Calu3 (cell line): ENCODE measurements at regions of chr1 and their contacts with region 1.

Region 1: DNA sequence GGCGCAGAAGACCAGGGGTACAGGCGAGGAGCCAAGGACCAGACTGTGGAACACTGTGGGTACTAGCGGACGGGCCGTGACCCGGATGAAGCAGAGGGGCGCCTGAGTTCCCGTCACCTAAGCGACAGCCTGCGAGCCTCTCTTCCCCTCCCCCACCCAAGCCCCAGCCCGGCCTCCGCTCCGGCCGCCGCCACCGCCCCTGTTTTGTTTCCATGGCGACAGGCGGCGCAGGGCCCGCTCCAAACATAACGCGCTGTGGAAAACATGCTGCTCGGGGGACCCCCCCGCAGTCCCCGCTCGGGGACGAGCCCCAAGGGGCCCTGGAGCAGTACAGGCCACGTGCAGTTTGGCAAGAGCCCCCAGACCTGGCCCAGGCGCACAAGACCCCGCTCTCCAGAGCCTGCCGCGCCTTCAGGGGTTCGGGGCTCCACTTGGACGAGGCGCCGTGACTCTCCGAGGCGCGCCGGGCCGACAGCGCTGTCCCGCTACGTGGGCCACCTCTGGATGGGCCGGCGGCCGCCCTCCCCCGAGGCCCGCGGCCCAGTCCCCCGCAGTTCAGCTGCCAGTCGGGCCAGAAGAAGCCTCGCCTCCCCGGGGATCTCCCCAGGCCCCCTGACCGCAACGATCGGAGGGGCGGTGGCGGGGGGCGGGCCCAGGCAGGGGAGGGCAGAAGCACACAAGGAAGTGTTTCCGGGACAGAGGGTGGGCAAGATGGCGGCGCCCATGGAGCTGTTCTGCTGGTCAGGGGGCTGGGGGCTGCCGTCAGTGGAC is at the start of gene MTX1:
- DNase-seq: peak; percentile 87
- H3K4me3 Mint-ChIP-seq: peak within 1 kb of the TSS; percentile 98
- H3K27ac Mint-ChIP-seq: peak within 1 kb of the TSS; percentile 92
- H3K4me1 Mint-ChIP-seq: peaks cover 30% of the 10 kb centered on the region
- H3K27me3 Mint-ChIP-seq: no peaks in the 10 kb centered on the region
- CTCF ChIP-seq: no peak
- total RNA-seq, gene MTX1: 58.9 and 60.0 TPM in 2 replicates

Region 2: DNA sequence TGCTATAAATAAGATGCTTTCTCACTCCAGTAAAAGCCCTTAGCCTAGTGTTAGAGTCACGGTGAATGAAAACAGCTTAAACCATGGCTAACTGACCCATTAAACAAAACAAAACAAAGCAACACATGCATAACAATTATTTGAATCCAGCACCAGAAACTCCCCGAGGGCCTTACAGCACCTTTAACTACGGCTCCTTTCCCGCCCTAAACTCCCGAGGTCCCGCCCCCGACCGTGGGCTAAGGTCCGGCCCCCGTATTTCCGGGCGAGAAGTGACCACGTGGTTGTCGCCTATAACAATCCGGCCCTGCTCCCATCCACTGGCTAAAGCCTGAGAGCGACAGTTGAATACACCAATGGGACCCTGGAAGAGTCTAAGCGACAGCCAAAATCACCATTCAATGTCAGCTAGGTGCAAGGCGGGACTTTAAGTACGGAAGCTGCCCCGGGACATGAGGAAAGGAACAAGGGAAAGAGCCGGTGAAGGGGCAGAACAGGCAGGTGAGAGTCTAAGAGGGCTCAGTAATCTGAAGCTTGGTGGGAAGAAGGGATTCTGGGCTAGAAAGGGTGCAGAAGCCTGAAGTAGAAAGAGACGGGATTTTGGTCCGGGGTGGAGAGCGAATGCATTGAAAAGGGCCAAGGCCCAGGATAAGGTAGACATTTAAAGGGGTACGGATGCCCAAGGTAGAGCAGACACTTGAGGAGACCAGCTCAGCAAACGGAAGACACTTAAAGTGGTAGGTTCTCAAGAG is 225.7 kb before region 1 on chr1 and contains the start of gene FLAD1:
- CTCF ChIA-PET with region 1: no interaction called
- intact Hi-C with region 1: no loop called
- DNase-seq: peak; percentile 99
- H3K4me3 Mint-ChIP-seq: no peak within 1 kb of the TSS
- H3K27ac Mint-ChIP-seq: no peak within 1 kb of the TSS
- H3K4me1 Mint-ChIP-seq: peaks cover 7% of the 10 kb centered on the region
- H3K27me3 Mint-ChIP-seq: no peaks in the 10 kb centered on the region
- CTCF ChIP-seq: no peak
- total RNA-seq, gene FLAD1: 74.3 and 75.1 TPM in 2 replicates

Region 3: GRCh38 chr1:155193275-155193990 is 15.3 kb before region 1 on chr1:
- CTCF ChIA-PET with region 1: interaction called, 23 read pairs
- intact Hi-C with region 1: no loop called
- DNase-seq: peak; percentile 95
- H3K4me3 Mint-ChIP-seq: peak overlapping the region; percentile 79
- H3K27ac Mint-ChIP-seq: peak overlapping the region; percentile 74
- H3K4me1 Mint-ChIP-seq: peaks cover 27% of the 10 kb centered on the region
- H3K27me3 Mint-ChIP-seq: peaks cover 49% of the 10 kb centered on the region
- CTCF ChIP-seq: peak; percentile 97

Region 4: DNA sequence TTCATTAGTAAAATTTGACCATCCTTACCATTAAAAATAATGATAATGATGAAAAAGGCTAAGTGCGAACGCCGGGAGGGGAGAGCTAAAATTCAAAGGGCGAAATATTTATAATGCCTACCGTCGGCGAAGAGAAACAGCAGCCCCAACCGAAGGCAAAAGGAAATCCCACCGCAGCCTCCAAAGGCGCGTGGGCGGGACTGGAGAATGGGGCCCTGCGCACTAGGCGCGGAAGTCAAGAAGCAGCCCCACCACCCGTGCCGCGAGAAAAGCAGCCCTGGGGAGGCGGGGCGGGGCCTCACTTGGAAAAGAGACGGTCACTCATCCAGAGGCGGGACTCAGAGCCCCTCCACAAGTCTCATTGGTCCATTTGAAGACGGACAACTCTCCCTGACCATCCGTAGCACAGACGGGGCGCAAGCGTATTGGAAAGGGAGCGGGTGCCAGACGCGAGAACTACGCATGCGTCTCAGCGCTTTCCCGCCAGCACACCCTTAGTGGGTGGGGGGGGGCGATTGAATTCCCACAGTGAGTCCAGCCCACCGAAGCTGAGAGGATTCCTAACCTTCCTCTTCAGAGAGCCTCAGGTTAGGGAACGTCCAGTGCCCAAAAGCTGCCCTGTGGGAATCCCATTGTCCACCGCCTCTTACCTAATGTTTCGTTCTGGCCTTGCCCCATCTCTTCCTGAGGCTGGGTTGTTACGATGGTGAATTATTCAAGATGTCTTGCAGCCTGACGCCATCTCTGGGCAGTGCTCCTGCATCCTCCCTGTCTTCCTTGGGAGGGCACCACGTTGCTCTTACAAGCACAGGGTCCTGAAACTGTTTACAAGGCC is 18.8 kb after region 1 on chr1:
- CTCF ChIA-PET with region 1: interaction called, 16 read pairs
- intact Hi-C with region 1: loop called (anchors 1 kb)
- DNase-seq: peak; percentile 99
- H3K4me3 Mint-ChIP-seq: peak overlapping the region; percentile 72
- H3K27ac Mint-ChIP-seq: peak overlapping the region; percentile 70
- H3K4me1 Mint-ChIP-seq: peaks cover 12% of the 10 kb centered on the region
- H3K27me3 Mint-ChIP-seq: peaks cover 10% of the 10 kb centered on the region
- CTCF ChIP-seq: no peak

Region 5: GRCh38 chr1:155329971-155330598 is 121.4 kb after region 1 on chr1:
- CTCF ChIA-PET with region 1: no interaction called
- intact Hi-C with region 1: no loop called
- DNase-seq: no peak
- H3K4me3 Mint-ChIP-seq: no peak overlapping the region
- H3K27ac Mint-ChIP-seq: no peak overlapping the region
- H3K4me1 Mint-ChIP-seq: peaks cover 14% of the 10 kb centered on the region
- H3K27me3 Mint-ChIP-seq: no peaks in the 10 kb centered on the region
- CTCF ChIP-seq: no peak